WTC11 (cell line): ENCODE measurements at regions of chr9 and their contacts with region 1.

Region 1: GRCh38 chr9:132546148-132547051 is 36.0 kb upstream of the BARHL1 start:
- DNase-seq: peak; percentile 78
- ATAC-seq: peak; percentile 70
- H3K4me3 Mint-ChIP-seq: peak overlapping the region; percentile 66
- H3K27ac Mint-ChIP-seq: no peak overlapping the region
- H3K4me1 Mint-ChIP-seq: peaks cover 24% of the 10 kb centered on the region
- H3K27me3 Mint-ChIP-seq: no peaks in the 10 kb centered on the region
- CTCF ChIP-seq: peak; percentile 45

Region 2: GRCh38 chr9:132411091-132411508 is 135.3 kb before region 1 on chr9:
- CTCF ChIA-PET with region 1: interaction called, 12 read pairs
- POLR2A ChIA-PET with region 1: no interaction called
- DNase-seq: peak; percentile 89
- ATAC-seq: peak; percentile 73
- H3K4me3 Mint-ChIP-seq: peak overlapping the region; percentile 72
- H3K27ac Mint-ChIP-seq: no peak overlapping the region
- H3K4me1 Mint-ChIP-seq: peaks cover 40% of the 10 kb centered on the region
- H3K27me3 Mint-ChIP-seq: peaks cover 30% of the 10 kb centered on the region
- CTCF ChIP-seq: peak; percentile 40; the same call in 1 of the 2 replicates

Region 3: GRCh38 chr9:132464547-132464946 is 81.9 kb before region 1 on chr9:
- CTCF ChIA-PET with region 1: no interaction called
- POLR2A ChIA-PET with region 1: no interaction called
- DNase-seq: no peak
- ATAC-seq: no peak
- H3K4me3 Mint-ChIP-seq: no peak overlapping the region
- H3K27ac Mint-ChIP-seq: no peak overlapping the region
- H3K4me1 Mint-ChIP-seq: no peaks in the 10 kb centered on the region
- H3K27me3 Mint-ChIP-seq: no peaks in the 10 kb centered on the region
- CTCF ChIP-seq: no peak

Region 4: DNA sequence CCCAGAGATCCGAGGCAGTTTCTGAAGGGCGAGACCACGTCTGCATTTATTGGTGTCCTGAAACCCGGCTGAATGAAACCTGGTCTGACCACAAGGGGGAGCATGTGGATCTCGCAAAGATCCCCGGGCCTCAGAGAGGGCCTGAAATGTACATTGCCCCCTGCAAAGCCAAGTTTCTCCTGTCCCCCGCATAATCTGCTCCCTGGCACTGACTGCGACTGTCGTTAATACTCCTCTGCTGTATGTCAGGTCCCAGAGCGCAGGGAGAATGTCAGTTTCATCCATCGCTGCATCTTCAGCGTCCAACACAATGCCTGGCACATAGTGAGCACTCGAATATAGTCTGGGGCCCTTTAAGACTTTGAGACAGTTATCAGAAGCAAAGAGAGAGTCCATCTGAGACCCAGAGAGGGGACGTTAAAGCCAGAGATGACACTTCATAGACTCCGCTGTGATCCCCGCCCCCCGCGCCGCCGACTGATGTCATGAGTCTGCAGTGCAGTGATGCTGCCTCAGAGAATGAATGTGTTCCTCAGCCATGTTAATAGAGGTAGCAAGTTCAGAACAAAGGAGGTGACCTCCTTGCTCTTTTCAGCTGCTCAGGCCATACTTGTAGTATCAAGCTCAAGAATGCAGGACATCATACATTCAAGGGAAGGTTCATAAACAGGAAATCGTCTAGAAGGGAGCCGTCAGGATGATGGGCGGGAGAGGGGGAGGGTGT is 38.5 kb before region 1 on chr9:
- CTCF ChIA-PET with region 1: interaction called, 22 read pairs
- POLR2A ChIA-PET with region 1: no interaction called
- DNase-seq: peak; percentile 84
- ATAC-seq: peak; percentile 79
- H3K4me3 Mint-ChIP-seq: no peak overlapping the region
- H3K27ac Mint-ChIP-seq: no peak overlapping the region
- H3K4me1 Mint-ChIP-seq: peaks cover 28% of the 10 kb centered on the region
- H3K27me3 Mint-ChIP-seq: no peaks in the 10 kb centered on the region
- CTCF ChIP-seq: peak; percentile 75

Region 5: DNA sequence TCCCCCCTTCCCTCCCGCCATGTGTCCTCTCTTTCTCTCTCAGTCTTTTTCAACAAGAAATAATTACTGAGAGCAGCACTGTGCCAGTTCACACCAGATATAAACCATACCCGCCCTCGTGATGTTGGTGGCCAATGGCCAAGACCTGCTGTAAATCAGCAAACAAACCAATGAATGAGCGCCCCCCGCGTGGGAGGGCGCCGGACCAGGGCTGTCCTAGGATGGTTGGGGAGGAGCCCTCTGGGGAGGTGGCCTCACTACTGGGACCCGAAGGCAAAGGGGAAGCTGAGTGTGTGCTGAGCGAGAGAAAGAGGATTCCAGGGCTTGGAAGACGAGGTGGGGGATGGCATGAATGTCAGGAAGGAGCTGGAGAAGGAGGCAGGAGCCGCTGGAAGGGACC is 15.2 kb before region 1 on chr9:
- CTCF ChIA-PET with region 1: interaction called, 27 read pairs
- POLR2A ChIA-PET with region 1: no interaction called
- DNase-seq: no peak
- ATAC-seq: peak; percentile 87
- H3K4me3 Mint-ChIP-seq: no peak overlapping the region
- H3K27ac Mint-ChIP-seq: no peak overlapping the region
- H3K4me1 Mint-ChIP-seq: peaks cover 10% of the 10 kb centered on the region; the same call in 1 of the 2 replicates
- H3K27me3 Mint-ChIP-seq: no peaks in the 10 kb centered on the region; the same call in 1 of the 2 replicates
- CTCF ChIP-seq: no peak

Region 6: GRCh38 chr9:132575005-132575609 is 28.7 kb after region 1 on chr9:
- CTCF ChIA-PET with region 1: interaction called, 25 read pairs
- POLR2A ChIA-PET with region 1: no interaction called
- DNase-seq: peak; percentile 91
- ATAC-seq: peak; percentile 85
- H3K4me3 Mint-ChIP-seq: no peak overlapping the region
- H3K27ac Mint-ChIP-seq: no peak overlapping the region
- H3K4me1 Mint-ChIP-seq: peaks cover 10% of the 10 kb centered on the region
- H3K27me3 Mint-ChIP-seq: peaks cover 52% of the 10 kb centered on the region
- CTCF ChIP-seq: peak; percentile 75

Region 7: DNA sequence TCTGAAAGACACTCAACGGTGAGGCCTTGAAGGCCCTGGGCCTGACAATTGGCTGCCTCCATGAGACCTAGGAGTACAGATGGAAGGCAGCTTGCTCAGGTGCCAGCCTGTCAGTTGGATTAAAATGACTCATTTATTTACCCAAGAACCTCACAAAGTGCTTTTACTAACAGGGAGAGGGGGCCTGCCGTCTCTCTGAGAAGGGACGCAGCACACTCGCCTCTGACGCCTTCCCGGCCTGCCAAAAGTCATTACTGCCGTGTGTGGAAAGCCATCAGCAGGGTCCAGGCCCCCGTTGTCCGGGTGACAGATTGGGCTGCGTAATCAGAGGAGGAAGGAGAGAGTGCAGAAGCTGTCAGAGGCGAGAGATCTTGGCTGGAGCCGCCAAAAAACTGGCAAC is 91.0 kb after region 1 on chr9:
- CTCF ChIA-PET with region 1: no interaction called
- POLR2A ChIA-PET with region 1: no interaction called
- DNase-seq: no peak
- ATAC-seq: no peak
- H3K4me3 Mint-ChIP-seq: no peak overlapping the region
- H3K27ac Mint-ChIP-seq: no peak overlapping the region; the same call in 1 of the 2 replicates
- H3K4me1 Mint-ChIP-seq: no peaks in the 10 kb centered on the region
- H3K27me3 Mint-ChIP-seq: no peaks in the 10 kb centered on the region
- CTCF ChIP-seq: no peak

Region 8: GRCh38 chr9:132679946-132680625 is 133.7 kb after region 1 on chr9:
- CTCF ChIA-PET with region 1: no interaction called
- POLR2A ChIA-PET with region 1: no interaction called
- DNase-seq: no peak
- ATAC-seq: no peak
- H3K4me3 Mint-ChIP-seq: no peak overlapping the region
- H3K27ac Mint-ChIP-seq: no peak overlapping the region
- H3K4me1 Mint-ChIP-seq: no peaks in the 10 kb centered on the region
- H3K27me3 Mint-ChIP-seq: no peaks in the 10 kb centered on the region
- CTCF ChIP-seq: no peak